Ascending aorta (tissue), 2 donors: ENCODE measurements at regions of chr1 and their contacts with region 1.

Region 1: GRCh38 chr1:229341774-229342655 is 832 bp downstream of the CCSAP start:
- DNase-seq: peak; percentile 41 to 88
- H3K4me3 ChIP-seq: peak overlapping the region; percentile 75 to 87
- H3K27ac ChIP-seq: peak overlapping the region; percentile 87 to 89
- H3K4me1 ChIP-seq: peaks cover 5 to 6% of the 10 kb centered on the region in 2 donors
- H3K27me3 ChIP-seq: no peaks in the 10 kb centered on the region
- CTCF ChIP-seq: no peak

Region 2: GRCh38 chr1:229270547-229271447 is 71.2 kb before region 1 on chr1 and contains the start of gene RAB4A:
- intact Hi-C with region 1: loop called (anchors 2 kb)
- DNase-seq: peak; percentile 40 to 89
- H3K4me3 ChIP-seq: peak within 1 kb of the TSS; percentile 77 to 97
- H3K27ac ChIP-seq: peak within 1 kb of the TSS; percentile 84
- H3K4me1 ChIP-seq: peaks cover 8 to 34% of the 10 kb centered on the region in 2 donors
- H3K27me3 ChIP-seq: no peaks in the 10 kb centered on the region
- CTCF ChIP-seq: no peak
- total RNA-seq, gene RAB4A: 6.0 TPM

Region 3: DNA sequence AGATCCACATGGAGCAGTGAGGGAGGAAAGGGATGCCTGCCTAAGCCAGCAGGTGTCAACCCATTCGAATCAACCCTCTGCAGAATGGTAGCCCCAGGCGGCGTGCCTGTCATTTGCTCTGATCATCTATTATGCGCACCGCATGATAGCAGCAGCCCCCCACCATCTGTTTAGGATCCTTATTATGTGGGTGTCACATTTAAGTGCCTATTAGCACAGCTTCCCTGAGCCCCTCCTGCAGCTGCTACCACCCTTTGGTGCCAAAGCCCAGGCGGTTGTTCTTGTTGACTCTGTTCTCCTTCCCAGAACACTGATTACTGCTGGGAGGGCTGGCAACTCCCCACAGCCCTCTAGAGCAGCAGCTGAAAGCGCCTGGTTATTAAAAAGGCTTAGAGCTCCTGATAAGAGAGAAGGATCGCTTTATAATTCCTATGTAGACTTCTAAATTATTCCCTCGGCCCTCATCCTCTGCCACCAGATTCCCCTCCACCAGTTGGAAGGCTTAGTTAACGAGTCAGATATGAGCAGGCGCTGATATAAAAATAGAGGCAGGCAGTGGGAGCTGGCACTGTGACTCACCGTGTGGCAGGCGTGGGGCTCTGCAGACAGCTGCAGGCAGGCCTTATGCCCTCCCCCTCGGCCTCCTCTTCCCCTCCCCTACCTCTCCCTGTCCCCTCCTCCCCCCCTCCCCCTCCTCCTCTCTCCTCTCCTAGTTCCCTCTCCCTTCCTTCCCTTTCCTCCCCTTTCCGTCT is 68.9 kb after region 1 on chr1:
- intact Hi-C with region 1: loop called (anchors 2 kb)
- DNase-seq: peak; percentile 47 to 83
- H3K4me3 ChIP-seq: peak overlapping the region in 1 of 2 donors; percentile 38
- H3K27ac ChIP-seq: peak overlapping the region; percentile 67 to 78
- H3K4me1 ChIP-seq: peaks cover 14 to 35% of the 10 kb centered on the region in 2 donors
- H3K27me3 ChIP-seq: no peaks in the 10 kb centered on the region
- CTCF ChIP-seq: no peak